ENCODE measurements at regions of chr6 and their contacts with region 1.

Region 1: GRCh38 chr6:31568537-31568961 is 3.5 kb upstream of the LTA start:
- DNase-seq: peak in 7 of 9 donors; percentile 58 to 84 (median 68)
- ATAC-seq: peak; percentile 82
- H3K4me3 ChIP-seq: peak overlapping the region; percentile 23
- H3K4me3 Mint-ChIP-seq: peak overlapping the region; percentile 39 to 77 (median 68)
- H3K27ac ChIP-seq: peak overlapping the region; percentile 77
- H3K27ac Mint-ChIP-seq: peak overlapping the region; percentile 84 to 99 (median 94)
- H3K4me1 ChIP-seq: peaks cover 55 to 58% of the 10 kb centered on the region in 2 donors
- H3K4me1 Mint-ChIP-seq: peaks cover 57 to 88% (median 77%) of the 10 kb centered on the region in 7 donors
- H3K27me3 ChIP-seq: no peaks in the 10 kb centered on the region
- H3K27me3 Mint-ChIP-seq: peaks cover 0 to 41% (median 0%) of the 10 kb centered on the region in 5 donors

Region 2: GRCh38 chr6:31094389-31094881 is 474.1 kb before region 1 on chr6:
- CTCF ChIA-PET with region 1: no interaction called
- POLR2A ChIA-PET with region 1: no interaction called
- intact Hi-C with region 1: no loop called
- DNase-seq: peak in 7 of 9 donors; percentile 13 to 75 (median 65)
- ATAC-seq: peak; percentile 78
- H3K4me3 ChIP-seq: peak overlapping the region; percentile 20
- H3K4me3 Mint-ChIP-seq: peak overlapping the region; percentile 58 to 91 (median 76)
- H3K27ac ChIP-seq: peak overlapping the region; percentile 39
- H3K27ac Mint-ChIP-seq: peak overlapping the region; percentile 75 to 99 (median 96)
- H3K4me1 ChIP-seq: peaks cover 28 to 39% of the 10 kb centered on the region in 2 donors
- H3K4me1 Mint-ChIP-seq: peaks cover 16 to 54% (median 42%) of the 10 kb centered on the region in 7 donors
- H3K27me3 ChIP-seq: no peaks in the 10 kb centered on the region
- H3K27me3 Mint-ChIP-seq: peaks cover 0 to 12% (median 0%) of the 10 kb centered on the region in 5 donors

Region 3: GRCh38 chr6:31580807-31581433 is 12.4 kb after region 1 on chr6:
- CTCF ChIA-PET with region 1: interaction called, 41 read pairs
- POLR2A ChIA-PET with region 1: interaction called, 3,078 read pairs
- intact Hi-C with region 1: loop called (anchors 1 kb)
- DNase-seq: peak; percentile 79 to 96 (median 88)
- ATAC-seq: peak; percentile 87
- H3K4me3 ChIP-seq: peak overlapping the region; percentile 97
- H3K4me3 Mint-ChIP-seq: peak overlapping the region; percentile 88 to 100 (median 99)
- H3K27ac ChIP-seq: peak overlapping the region; percentile 97
- H3K27ac Mint-ChIP-seq: peak overlapping the region; percentile 94 to 100 (median 97)
- H3K4me1 ChIP-seq: peaks cover 54 to 60% of the 10 kb centered on the region in 2 donors
- H3K4me1 Mint-ChIP-seq: peaks cover 47 to 80% (median 63%) of the 10 kb centered on the region in 7 donors
- H3K27me3 ChIP-seq: no peaks in the 10 kb centered on the region
- H3K27me3 Mint-ChIP-seq: no peaks in the 10 kb centered on the region

Measured in naive thymus-derived CD4-positive, alpha-beta T cell (primary cell).